CD8-positive, alpha-beta memory T cell (primary cell): ENCODE measurements at regions of chr16 and their contacts with region 1.

Region 1: GRCh38 chr16:30429678-30430427 is at the start of gene DCTPP1:
- DNase-seq: peak; percentile 92 to 98 (median 96)
- H3K4me3 ChIP-seq: peak within 1 kb of the TSS; percentile 81
- H3K4me3 Mint-ChIP-seq: no peak within 1 kb of the TSS
- H3K27ac ChIP-seq: peak within 1 kb of the TSS; percentile 62
- H3K27ac Mint-ChIP-seq: peak within 1 kb of the TSS in 1 of 8 donors; percentile 70
- H3K4me1 ChIP-seq: peaks cover 25% of the 10 kb centered on the region
- H3K4me1 Mint-ChIP-seq: peaks cover 17 to 20% (median 20%) of the 10 kb centered on the region in 3 donors
- H3K27me3 ChIP-seq: no peaks in the 10 kb centered on the region
- H3K27me3 Mint-ChIP-seq: no peaks in the 10 kb centered on the region
- total RNA-seq, gene DCTPP1: 174 to 175 TPM

Region 2: DNA sequence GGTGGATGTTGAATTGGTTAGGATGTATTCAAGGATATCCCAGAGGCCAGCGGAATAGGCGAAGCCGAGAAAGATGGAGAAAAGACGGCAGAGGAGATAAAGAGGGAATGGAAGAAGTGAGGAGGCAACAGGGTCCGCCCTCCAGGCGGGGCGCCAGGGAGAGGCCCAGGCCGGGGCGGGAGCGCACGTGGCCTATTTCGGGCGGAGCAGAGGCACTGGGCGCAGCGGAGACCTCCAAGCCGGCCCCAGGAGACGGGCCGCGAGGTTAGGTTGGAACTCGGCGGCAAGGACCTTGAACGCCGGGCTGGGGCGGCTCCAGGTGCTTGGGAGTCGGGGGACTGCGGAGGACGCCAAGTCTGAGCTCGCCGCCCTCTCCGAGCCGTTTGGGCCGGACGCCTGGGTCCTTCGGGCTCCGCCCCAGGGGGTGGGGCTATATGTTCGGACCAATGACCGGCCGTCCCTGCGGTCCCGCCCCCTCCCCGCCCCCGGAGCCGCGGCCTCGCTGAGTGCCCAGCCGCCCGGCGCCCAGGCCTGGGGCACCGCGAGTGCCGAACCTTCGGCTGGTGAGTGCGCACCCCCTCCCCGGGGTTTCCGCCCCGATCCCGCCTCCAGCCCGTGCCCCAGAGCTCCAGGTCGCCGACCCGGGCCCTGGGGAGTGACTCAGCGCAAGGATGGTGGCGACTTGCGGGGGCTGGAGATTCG is 22.6 kb before region 1 on chr16 and contains the start of gene ZNF771:
- CTCF ChIA-PET with region 1: interaction called, 14 read pairs
- POLR2A ChIA-PET with region 1: interaction called, 4 read pairs
- DNase-seq: peak; percentile 79 to 90 (median 90)
- H3K4me3 ChIP-seq: peak within 1 kb of the TSS; percentile 87
- H3K4me3 Mint-ChIP-seq: peak within 1 kb of the TSS; percentile 88 to 99 (median 91)
- H3K27ac ChIP-seq: peak within 1 kb of the TSS; percentile 54
- H3K27ac Mint-ChIP-seq: peak within 1 kb of the TSS; percentile 81 to 98 (median 94)
- H3K4me1 ChIP-seq: peaks cover 12% of the 10 kb centered on the region
- H3K4me1 Mint-ChIP-seq: peaks cover 22 to 34% (median 23%) of the 10 kb centered on the region in 3 donors
- H3K27me3 ChIP-seq: no peaks in the 10 kb centered on the region
- H3K27me3 Mint-ChIP-seq: no peaks in the 10 kb centered on the region
- total RNA-seq, gene ZNF771: 7.3 to 9.8 TPM

Region 3: DNA sequence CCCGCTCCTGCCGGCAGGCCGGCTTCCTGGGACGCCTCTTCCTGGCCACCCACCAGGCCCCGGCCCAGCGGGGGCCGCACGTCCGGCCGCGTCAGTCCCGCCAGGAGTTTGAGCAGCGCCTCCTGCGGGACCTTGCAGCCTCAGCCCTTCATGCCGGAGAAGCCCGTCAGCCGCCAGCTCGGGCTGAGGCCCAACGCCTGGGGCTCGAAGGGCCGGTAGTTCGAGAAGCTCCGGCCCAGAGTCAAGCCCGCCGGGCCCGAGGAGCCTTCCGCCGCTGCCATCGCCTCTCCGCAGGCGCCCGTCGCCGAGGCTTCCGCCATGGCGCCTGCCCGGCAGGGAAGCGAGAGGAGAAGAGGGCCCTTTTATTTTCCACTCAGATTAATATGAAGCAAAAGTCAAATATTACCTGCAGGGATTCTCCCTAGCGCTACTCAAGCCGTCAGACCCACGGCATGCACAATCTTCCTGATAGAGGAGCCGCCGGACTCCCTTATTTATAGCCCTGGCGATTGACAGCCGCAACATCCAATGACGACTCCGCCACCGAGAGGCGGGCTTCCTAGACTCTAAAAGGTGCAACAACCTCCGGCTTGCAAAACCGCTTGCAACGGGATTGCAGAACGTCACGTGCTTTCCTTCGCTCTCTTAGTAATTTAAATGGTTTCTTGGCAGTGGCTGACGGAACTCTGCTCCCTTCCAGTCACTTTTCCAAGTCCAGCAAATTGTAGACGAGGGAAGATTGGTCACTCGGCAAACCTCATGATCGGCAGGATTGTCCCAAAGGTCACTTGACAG is 15.8 kb after region 1 on chr16 and contains the start of gene SEPHS2:
- CTCF ChIA-PET with region 1: interaction called, 21 read pairs
- POLR2A ChIA-PET with region 1: no interaction called
- DNase-seq: peak; percentile 91 to 98 (median 92)
- H3K4me3 ChIP-seq: peak within 1 kb of the TSS; percentile 92
- H3K4me3 Mint-ChIP-seq: peak within 1 kb of the TSS; percentile 88 to 97 (median 95)
- H3K27ac ChIP-seq: peak within 1 kb of the TSS; percentile 93
- H3K27ac Mint-ChIP-seq: peak within 1 kb of the TSS; percentile 87 to 96 (median 94)
- H3K4me1 ChIP-seq: peaks cover 40% of the 10 kb centered on the region
- H3K4me1 Mint-ChIP-seq: peaks cover 37 to 50% (median 45%) of the 10 kb centered on the region in 3 donors
- H3K27me3 ChIP-seq: no peaks in the 10 kb centered on the region
- H3K27me3 Mint-ChIP-seq: peaks cover 0 to 1% of the 10 kb centered on the region in 2 donors
- total RNA-seq, gene SEPHS2: 68.2 to 71.0 TPM

Region 4: DNA sequence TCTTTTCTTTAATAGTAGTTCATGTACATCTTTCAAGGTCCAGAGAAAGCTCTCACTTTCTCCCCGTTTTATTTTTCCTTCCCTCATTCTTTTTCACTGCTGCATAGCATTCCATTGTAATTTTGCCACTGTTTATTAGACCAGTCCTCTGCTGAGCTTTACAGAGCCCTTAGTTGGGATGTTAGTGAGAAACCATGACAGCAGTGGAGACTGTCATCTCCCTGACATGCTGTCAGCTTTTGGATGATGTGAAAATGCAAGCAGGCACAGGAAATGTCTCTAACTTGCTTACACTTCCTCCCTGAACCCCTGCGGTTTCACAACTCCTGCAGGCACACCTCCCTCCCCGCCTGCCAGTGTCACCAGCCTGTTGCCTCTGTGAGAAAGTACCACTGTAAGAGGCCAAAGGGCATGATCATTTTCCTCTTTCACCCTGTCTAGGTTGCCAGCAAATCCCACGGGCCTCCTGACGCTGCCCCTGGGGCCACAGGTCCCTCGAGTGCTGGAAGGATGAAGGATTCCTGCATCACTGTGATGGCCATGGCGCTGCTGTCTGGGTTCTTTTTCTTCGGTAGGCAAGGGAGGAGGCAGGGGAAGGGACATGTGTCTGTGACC is 42.6 kb after region 1 on chr16 and contains the start of gene ITGAL:
- CTCF ChIA-PET with region 1: interaction called, 23 read pairs
- POLR2A ChIA-PET with region 1: interaction called, 20 read pairs
- DNase-seq: peak; percentile 76 to 93 (median 84)
- H3K4me3 ChIP-seq: peak within 1 kb of the TSS; percentile 91
- H3K4me3 Mint-ChIP-seq: peak within 1 kb of the TSS; percentile 96 to 100 (median 98)
- H3K27ac ChIP-seq: peak within 1 kb of the TSS; percentile 74
- H3K27ac Mint-ChIP-seq: peak within 1 kb of the TSS; percentile 94 to 99 (median 97)
- H3K4me1 ChIP-seq: peaks cover 65% of the 10 kb centered on the region
- H3K4me1 Mint-ChIP-seq: peaks cover 54 to 76% (median 56%) of the 10 kb centered on the region in 3 donors
- H3K27me3 ChIP-seq: no peaks in the 10 kb centered on the region
- H3K27me3 Mint-ChIP-seq: peaks cover 0 to 1% of the 10 kb centered on the region in 2 donors
- total RNA-seq, gene ITGAL: 333 to 363 TPM

Region 5: GRCh38 chr16:30526823-30527635 is 97.2 kb after region 1 on chr16:
- CTCF ChIA-PET with region 1: interaction called, 11 read pairs
- POLR2A ChIA-PET with region 1: interaction called, 4 read pairs
- DNase-seq: peak; percentile 75 to 91 (median 82)
- H3K4me3 ChIP-seq: peak overlapping the region; percentile 21
- H3K4me3 Mint-ChIP-seq: peak overlapping the region; percentile 80 to 94 (median 84)
- H3K27ac ChIP-seq: peak overlapping the region; percentile 79
- H3K27ac Mint-ChIP-seq: peak overlapping the region; percentile 78 to 99 (median 92)
- H3K4me1 ChIP-seq: peaks cover 19% of the 10 kb centered on the region
- H3K4me1 Mint-ChIP-seq: peaks cover 14 to 27% (median 25%) of the 10 kb centered on the region in 3 donors
- H3K27me3 ChIP-seq: no peaks in the 10 kb centered on the region
- H3K27me3 Mint-ChIP-seq: no peaks in the 10 kb centered on the region

Region 6: DNA sequence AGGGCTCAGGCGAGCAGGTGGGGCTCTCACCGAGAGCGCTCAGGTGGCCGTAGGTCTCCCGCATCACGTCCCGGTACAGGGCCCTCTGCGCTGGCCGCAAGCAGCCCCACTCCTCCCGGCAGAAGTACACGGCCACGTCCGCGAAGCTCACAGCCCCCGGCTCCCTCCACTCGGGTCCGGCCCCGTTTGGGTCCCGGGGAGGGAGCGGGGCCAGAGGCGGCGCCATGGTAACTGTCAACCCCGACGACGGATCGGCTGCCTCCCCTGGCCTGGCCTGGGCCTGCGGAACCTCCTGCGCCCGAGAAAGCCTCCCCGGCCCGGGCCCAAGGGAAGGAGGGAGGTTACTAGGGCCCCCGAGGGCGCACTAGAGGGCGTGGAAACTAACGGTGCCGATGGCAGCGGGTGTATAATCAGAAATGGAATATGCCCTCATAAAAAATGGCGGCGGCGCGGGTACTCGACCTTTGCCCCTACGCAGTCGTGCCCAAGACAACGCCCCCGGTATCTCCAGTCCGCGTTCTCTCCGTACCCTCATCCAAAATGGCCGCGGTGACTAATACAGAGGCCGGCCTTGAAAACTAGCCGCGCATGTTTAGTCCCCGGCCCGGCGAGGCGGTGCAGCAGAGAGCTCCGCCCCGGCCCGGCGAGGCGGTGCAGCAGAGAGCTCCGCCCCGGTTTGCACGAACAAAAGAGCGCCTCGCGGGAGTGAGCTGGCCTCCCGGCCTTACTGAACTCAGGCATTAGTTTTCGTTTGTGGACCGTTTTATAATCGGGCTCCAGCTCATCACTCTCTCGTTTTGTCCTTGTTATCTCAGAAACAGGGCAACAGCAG is 128.3 kb after region 1 on chr16 and contains the start of gene ZNF764:
- CTCF ChIA-PET with region 1: interaction called, 13 read pairs
- POLR2A ChIA-PET with region 1: interaction called, 5 read pairs
- DNase-seq: peak; percentile 92 to 98 (median 95)
- H3K4me3 ChIP-seq: peak within 1 kb of the TSS; percentile 90
- H3K4me3 Mint-ChIP-seq: peak within 1 kb of the TSS; percentile 85 to 95 (median 89)
- H3K27ac ChIP-seq: peak within 1 kb of the TSS; percentile 93
- H3K27ac Mint-ChIP-seq: peak within 1 kb of the TSS; percentile 87 to 97 (median 92)
- H3K4me1 ChIP-seq: peaks cover 27% of the 10 kb centered on the region
- H3K4me1 Mint-ChIP-seq: peaks cover 38 to 63% (median 40%) of the 10 kb centered on the region in 3 donors
- H3K27me3 ChIP-seq: no peaks in the 10 kb centered on the region
- H3K27me3 Mint-ChIP-seq: peaks cover 0 to 2% of the 10 kb centered on the region in 2 donors
- total RNA-seq, gene ZNF764: 15.1 to 15.7 TPM

Region 7: GRCh38 chr16:31713071-31713944 is 1283.5 kb after region 1 on chr16:
- CTCF ChIA-PET with region 1: no interaction called
- POLR2A ChIA-PET with region 1: no interaction called
- DNase-seq: peak; percentile 84 to 93 (median 87)
- H3K4me3 ChIP-seq: peak overlapping the region; percentile 97
- H3K4me3 Mint-ChIP-seq: peak overlapping the region; percentile 98 to 100 (median 100)
- H3K27ac ChIP-seq: peak overlapping the region; percentile 91
- H3K27ac Mint-ChIP-seq: peak overlapping the region; percentile 96 to 100 (median 99)
- H3K4me1 ChIP-seq: peaks cover 35% of the 10 kb centered on the region
- H3K4me1 Mint-ChIP-seq: peaks cover 55 to 71% (median 65%) of the 10 kb centered on the region in 3 donors
- H3K27me3 ChIP-seq: no peaks in the 10 kb centered on the region
- H3K27me3 Mint-ChIP-seq: no peaks in the 10 kb centered on the region